PC-3 (cell line): ENCODE measurements at regions of chr2 and their contacts with region 1.

Region 1: GRCh38 chr2:233976690-233977294 is 59.6 kb downstream of the TRPM8 start:
- DNase-seq: peak; percentile 85
- ATAC-seq: peak; percentile 48
- H3K4me3 ChIP-seq: no peak overlapping the region
- H3K27ac ChIP-seq: no peak overlapping the region
- H3K4me1 ChIP-seq: peaks cover 64% of the 10 kb centered on the region
- H3K27me3 ChIP-seq: no peaks in the 10 kb centered on the region
- CTCF ChIP-seq: peak; percentile 75

Region 2: DNA sequence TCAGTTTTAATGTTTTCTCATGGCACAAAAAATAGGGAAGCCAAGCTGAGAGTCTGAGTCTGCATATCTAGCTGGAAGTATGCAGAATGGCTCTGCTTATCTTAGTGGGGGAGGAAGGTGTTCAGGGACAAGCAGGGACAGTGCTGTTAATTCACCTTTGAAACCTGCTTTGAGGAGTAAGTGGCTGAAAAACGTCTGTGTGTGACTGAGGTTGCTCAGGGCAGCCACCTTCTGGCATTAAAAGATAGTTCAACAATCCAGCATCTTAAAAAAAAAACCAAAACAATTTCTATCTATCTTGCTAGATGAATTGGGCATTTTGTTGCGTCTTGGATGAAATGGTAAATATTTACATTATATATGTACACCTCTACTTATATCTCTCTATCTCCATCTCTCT is 61.7 kb before region 1 on chr2:
- CTCF ChIA-PET with region 1: no interaction called
- POLR2A ChIA-PET with region 1: no interaction called
- intact Hi-C with region 1: loop called (anchors 5 kb)
- DNase-seq: peak; percentile 47
- ATAC-seq: 0 out of 2 replicates have a peak, but pooled peaks have one; percentile 48
- H3K4me3 ChIP-seq: no peak overlapping the region
- H3K27ac ChIP-seq: no peak overlapping the region
- H3K4me1 ChIP-seq: peaks cover 4% of the 10 kb centered on the region
- H3K27me3 ChIP-seq: peaks cover 23% of the 10 kb centered on the region; the same call in 1 of the 2 replicates
- CTCF ChIP-seq: peak; percentile 58

Region 3: GRCh38 chr2:233936089-233936488 is 40.7 kb before region 1 on chr2:
- CTCF ChIA-PET with region 1: no interaction called
- POLR2A ChIA-PET with region 1: no interaction called
- intact Hi-C with region 1: no loop called
- DNase-seq: no peak
- ATAC-seq: peak; percentile 48; the same call in 1 of the 2 replicates
- H3K4me3 ChIP-seq: no peak overlapping the region
- H3K27ac ChIP-seq: no peak overlapping the region
- H3K4me1 ChIP-seq: no peaks in the 10 kb centered on the region
- H3K27me3 ChIP-seq: no peaks in the 10 kb centered on the region
- CTCF ChIP-seq: no peak

Region 4: GRCh38 chr2:234111523-234111922 is 134.7 kb after region 1 on chr2:
- CTCF ChIA-PET with region 1: no interaction called
- POLR2A ChIA-PET with region 1: no interaction called
- intact Hi-C with region 1: loop called (anchors 5 kb)
- DNase-seq: peak; percentile 96
- ATAC-seq: peak; percentile 100
- H3K4me3 ChIP-seq: no peak overlapping the region
- H3K27ac ChIP-seq: peak overlapping the region; percentile 69
- H3K4me1 ChIP-seq: peaks cover 26% of the 10 kb centered on the region
- H3K27me3 ChIP-seq: no peaks in the 10 kb centered on the region
- CTCF ChIP-seq: no peak

Region 5: DNA sequence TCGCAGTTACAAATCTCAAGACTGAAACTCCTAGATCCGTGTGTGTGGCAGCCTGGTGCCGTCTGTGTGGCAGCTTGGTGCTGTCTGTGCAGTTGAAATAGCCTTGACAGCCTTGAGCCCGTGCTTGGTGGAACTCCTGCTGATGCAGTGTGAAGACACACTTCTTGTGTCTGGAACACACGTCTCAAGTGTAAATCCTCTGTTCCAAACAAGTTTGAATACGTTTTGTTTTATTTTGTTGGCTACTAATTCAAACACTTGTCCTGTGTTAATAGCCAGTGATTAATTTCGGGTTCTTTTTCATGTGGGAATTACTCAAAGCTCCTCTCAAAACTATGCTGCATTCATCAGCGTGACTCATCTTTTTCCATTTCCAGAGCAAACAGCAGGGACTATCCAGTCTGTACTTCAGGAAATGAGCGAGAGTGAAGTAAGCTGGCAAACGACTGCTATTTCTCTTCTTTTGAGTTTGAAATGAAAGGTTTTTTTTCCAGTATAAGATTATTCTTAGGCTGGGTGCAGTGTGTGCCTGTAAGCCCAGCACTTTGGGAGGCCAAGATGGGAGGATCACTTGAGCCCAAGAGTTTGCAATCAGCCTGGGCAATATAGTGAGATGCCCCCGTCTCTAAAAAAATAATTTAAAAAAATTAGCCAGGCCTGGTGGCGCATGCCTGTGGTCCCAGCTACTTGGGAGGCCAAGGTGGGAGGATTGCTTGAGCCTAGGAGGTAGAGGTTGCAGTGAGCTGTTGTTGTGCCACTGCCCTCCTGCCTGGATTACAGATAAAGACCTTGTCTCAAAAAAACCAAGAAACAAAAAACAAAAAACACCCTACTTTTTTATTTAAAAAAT is 226.6 kb after region 1 on chr2:
- CTCF ChIA-PET with region 1: no interaction called
- POLR2A ChIA-PET with region 1: no interaction called
- intact Hi-C with region 1: loop called (anchors 5 kb)
- DNase-seq: peak; percentile 97
- ATAC-seq: peak; percentile 97
- H3K4me3 ChIP-seq: peak overlapping the region; percentile 39
- H3K27ac ChIP-seq: peak overlapping the region; percentile 89
- H3K4me1 ChIP-seq: peaks cover 32% of the 10 kb centered on the region
- H3K27me3 ChIP-seq: no peaks in the 10 kb centered on the region
- CTCF ChIP-seq: no peak

Region 6: DNA sequence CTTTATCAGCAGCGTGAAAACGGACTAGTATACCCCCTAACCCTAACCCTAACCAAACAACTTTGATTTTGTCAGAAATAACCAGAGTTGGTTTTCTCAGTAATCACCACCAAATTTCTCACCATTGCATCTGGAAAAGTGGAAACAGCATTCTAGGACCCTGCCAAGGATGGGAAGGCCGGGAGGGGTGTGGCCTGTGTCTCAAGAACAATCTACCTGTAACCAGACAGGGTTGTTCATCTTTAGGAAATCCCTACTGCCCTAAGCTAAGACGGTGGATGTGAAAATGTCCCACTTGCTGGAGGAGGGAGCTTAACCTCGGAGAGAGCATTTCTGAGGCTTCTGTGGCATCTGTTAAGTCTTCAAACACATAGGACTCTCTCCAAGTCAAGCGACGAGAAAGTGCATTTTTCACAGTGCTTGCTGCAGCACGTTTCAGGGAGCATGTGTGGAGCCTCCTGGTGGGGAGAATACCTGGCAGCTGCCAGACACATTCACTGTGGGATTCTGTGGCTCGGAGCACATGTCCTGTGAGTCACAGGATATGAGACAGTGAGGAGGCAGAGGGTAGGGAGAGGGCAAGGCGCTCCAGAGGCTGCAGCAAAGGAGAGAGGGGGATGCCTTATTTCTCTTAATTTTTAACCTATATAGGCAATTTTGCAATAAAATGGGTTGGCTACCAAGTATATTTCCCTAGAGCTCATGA is 281.2 kb after region 1 on chr2:
- CTCF ChIA-PET with region 1: no interaction called
- POLR2A ChIA-PET with region 1: no interaction called
- intact Hi-C with region 1: loop called (anchors 2 kb)
- DNase-seq: peak; percentile 97
- ATAC-seq: peak; percentile 99
- H3K4me3 ChIP-seq: peak overlapping the region; percentile 22; the same call in 1 of the 2 replicates
- H3K27ac ChIP-seq: peak overlapping the region; percentile 97
- H3K4me1 ChIP-seq: peaks cover 41% of the 10 kb centered on the region
- H3K27me3 ChIP-seq: no peaks in the 10 kb centered on the region
- CTCF ChIP-seq: peak; percentile 80

Region 7: DNA sequence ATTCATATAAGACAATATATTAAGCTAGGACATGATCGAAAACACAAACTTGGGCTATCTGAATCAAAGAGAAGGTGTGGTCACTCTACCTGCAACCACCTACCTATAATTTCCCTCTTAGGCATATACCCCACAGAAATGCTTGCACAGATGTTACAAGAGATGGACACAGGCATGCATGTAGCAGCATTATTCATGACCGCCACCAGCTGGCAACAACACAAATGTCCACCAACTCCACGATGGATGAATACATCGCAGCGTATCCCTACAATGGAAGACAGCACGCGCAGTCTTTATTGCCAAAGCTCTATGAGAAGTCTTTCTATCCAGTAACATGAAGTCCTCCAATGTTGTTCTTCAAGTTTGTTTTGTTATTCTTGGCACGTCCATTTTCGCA is 429.3 kb after region 1 on chr2:
- CTCF ChIA-PET with region 1: no interaction called
- POLR2A ChIA-PET with region 1: no interaction called
- intact Hi-C with region 1: loop called (anchors 5 kb)
- DNase-seq: peak; percentile 25
- ATAC-seq: peak; percentile 58; the same call in 1 of the 2 replicates
- H3K4me3 ChIP-seq: no peak overlapping the region
- H3K27ac ChIP-seq: no peak overlapping the region
- H3K4me1 ChIP-seq: 0 out of 2 replicates have a peak, but pooled peaks cover 6% of the 10 kb centered on the region
- H3K27me3 ChIP-seq: no peaks in the 10 kb centered on the region
- CTCF ChIP-seq: peak; percentile 53

Region 8: GRCh38 chr2:234544659-234545611 is 568.1 kb after region 1 on chr2:
- CTCF ChIA-PET with region 1: no interaction called
- POLR2A ChIA-PET with region 1: no interaction called
- intact Hi-C with region 1: loop called (anchors 1 kb)
- DNase-seq: peak; percentile 78
- ATAC-seq: peak; percentile 91
- H3K4me3 ChIP-seq: no peak overlapping the region
- H3K27ac ChIP-seq: no peak overlapping the region
- H3K4me1 ChIP-seq: peaks cover 5% of the 10 kb centered on the region; the same call in 1 of the 2 replicates
- H3K27me3 ChIP-seq: no peaks in the 10 kb centered on the region
- CTCF ChIP-seq: peak; percentile 86